Aorta (tissue), 5 donors: ENCODE measurements at regions of chr17 and their contacts with region 1.

Region 1: DNA sequence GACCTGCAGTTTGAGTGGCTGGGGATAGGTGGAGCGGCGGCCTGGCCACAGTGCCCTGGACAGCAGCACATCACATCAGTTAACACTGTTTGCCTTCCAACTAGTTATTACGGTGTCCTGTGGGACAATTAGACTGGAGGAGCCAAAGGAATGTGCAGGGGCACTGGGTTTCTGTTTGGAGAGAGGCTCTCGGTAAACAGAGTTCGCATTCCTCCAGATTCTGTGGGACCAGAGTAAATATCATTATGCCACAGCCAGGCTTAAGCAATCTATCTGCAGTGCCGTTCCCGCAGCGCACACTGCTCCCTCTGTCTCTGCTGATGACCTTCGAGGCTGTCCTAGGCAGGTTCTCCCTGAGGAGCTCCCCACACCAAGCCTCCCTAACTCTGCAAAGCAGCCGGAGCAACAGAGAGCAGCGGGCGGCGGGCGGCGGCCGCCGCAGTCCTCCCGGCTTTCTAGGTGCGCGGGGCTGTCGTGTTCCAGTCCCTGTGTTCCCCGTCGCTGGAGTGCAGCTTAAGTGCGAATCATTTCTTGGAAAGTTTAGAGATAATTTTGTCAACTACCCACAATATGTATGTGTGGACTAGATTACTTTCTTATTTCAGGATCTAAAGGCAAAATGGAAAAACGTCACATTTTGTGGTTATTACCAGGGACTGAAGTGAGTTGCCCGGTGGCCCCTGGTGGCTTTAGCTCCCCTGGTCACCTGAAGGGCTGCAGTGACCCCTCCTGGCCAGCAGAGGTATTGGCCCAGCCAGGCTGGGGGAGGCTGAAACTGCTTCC is 43.2 kb downstream of the PGS1 start:
- DNase-seq: peak; percentile 87 to 92
- ATAC-seq: peak; percentile 81
- H3K4me3 ChIP-seq: no peak overlapping the region
- H3K27ac ChIP-seq: no peak overlapping the region
- H3K4me1 ChIP-seq: no peaks in the 10 kb centered on the region
- H3K27me3 ChIP-seq: no peaks in the 10 kb centered on the region

Region 2: DNA sequence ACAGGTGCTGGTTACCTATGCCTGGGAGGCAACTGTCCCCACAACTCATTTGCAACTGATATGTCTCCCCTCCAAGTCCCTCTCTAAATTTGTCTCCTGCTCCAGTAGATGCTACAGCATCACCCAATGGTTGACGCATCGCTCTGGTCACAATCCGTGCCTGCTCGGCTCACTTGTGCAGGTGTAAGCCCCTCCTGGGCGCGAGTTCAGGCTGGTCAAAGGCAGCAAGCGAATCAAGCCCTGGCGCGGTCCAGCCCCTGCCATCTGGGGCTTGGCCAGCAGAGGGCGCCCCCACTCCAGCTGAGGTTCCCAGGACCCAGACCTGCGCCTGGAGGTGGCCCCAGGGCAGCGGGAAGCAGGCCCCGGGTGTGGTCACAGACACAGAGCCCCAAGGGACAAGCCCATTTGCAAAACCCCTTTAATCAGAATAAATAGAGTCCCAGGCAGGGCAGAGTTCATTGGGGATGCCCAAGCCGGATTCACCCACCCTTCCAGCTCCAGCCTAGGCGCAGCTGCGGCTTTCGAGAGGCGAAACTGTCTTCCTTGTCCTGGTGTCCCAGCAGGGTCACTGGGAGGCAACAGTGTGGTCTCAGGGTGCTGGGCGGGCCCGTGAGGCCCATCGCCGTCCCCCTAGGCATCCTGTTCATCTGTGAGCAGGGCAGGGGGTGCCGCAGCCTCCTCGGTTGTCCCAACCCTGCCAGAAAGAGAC is 309.0 kb before region 1 on chr17:
- intact Hi-C with region 1: loop called in 1 of 2 experiments (anchors 10 kb)
- DNase-seq: peak; percentile 78 to 92
- ATAC-seq: peak; percentile 83
- H3K4me3 ChIP-seq: no peak overlapping the region
- H3K27ac ChIP-seq: no peak overlapping the region
- H3K4me1 ChIP-seq: no peaks in the 10 kb centered on the region
- H3K27me3 ChIP-seq: no peaks in the 10 kb centered on the region

Region 3: GRCh38 chr17:78250891-78251794 is 170.5 kb before region 1 on chr17:
- intact Hi-C with region 1: loop called in 1 of 2 experiments (anchors 5 kb)
- DNase-seq: peak; percentile 90 to 95
- ATAC-seq: peak; percentile 90
- H3K4me3 ChIP-seq: no peak overlapping the region
- H3K27ac ChIP-seq: no peak overlapping the region
- H3K4me1 ChIP-seq: no peaks in the 10 kb centered on the region
- H3K27me3 ChIP-seq: no peaks in the 10 kb centered on the region

Region 4: DNA sequence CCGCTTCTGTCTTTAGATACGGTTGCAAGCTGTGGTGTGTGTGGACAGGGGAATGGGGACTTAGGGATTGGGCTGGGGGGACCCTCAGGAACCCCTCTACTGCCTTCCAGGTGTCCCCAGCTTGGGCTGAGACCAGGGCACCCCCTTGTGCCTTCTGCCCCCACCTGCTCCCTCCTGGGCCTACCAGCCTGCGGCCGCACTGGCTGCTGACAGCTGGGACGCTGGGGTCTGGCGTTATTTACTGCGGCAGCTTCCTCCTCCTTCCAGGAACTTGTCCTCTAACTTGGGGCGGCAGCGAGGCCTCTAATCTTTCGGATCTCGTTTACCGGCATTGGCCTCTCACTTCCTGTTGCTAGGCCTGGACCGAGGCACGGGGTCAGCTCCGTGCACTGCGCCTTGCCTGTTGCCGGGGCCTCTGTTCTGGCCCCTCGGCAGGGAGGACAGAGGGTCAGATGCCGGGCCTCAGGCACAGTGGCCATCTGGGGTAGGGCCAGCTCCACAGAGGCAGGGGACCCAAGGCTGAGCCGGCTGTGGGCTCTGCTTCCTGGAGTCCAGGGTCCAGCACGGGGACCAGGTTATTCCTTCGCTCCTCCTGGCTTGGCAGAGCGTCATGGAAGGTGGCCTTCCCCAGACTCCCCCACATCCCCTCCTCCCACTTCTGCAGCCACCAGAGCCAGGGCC is 158.5 kb before region 1 on chr17:
- intact Hi-C with region 1: no loop called
- DNase-seq: peak; percentile 79 to 81
- ATAC-seq: peak; percentile 23
- H3K4me3 ChIP-seq: no peak overlapping the region
- H3K27ac ChIP-seq: no peak overlapping the region
- H3K4me1 ChIP-seq: no peaks in the 10 kb centered on the region
- H3K27me3 ChIP-seq: no peaks in the 10 kb centered on the region

Region 5: GRCh38 chr17:78289802-78290363 is 131.8 kb before region 1 on chr17:
- intact Hi-C with region 1: loop called (anchors 2 kb)
- DNase-seq: peak; percentile 88 to 91
- ATAC-seq: peak; percentile 90
- H3K4me3 ChIP-seq: no peak overlapping the region
- H3K27ac ChIP-seq: no peak overlapping the region
- H3K4me1 ChIP-seq: no peaks in the 10 kb centered on the region
- H3K27me3 ChIP-seq: no peaks in the 10 kb centered on the region

Region 6: DNA sequence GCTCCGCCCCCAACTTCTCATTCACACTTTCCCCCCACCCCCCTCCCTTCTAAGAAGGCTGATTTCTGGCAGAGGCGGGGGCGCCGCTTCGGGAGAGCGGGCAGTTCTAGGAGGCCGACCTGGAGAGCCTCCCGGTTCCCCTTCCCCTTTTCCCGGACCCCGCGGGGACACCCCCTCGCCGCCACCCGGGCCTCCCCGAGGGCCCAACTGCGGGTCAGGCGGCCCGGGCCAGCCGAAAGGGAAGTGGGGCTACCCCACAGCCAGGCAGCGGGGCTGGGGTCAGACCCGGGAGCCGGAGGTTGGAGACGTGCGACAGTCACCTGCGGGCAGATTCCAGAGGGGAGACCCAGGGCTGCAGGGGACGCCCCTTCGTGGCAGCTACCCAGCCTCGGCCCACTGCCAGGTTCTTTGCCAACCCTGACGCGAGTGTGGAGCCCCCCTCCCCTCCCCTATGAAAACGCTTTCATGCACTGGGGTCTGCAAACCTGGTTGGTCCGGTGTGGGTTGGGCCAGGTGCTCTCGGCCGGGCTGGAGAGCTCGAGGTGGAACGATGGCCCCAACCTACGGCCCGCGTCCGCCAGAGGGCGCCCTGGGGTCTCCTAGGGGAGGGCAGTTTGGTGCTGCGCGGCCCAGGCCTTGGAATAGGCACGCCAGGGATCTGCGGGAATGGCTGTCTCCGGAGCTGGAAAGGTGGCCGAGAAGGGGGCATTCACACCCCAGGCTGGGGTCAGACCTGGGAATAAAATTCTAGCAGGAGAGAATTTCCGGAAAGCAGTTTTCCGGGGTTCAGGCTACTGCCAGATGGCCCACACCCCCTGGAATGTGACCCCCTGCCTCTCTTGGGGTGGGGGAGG is 61.1 kb before region 1 on chr17:
- intact Hi-C with region 1: loop called (anchors 1 to 5 kb)
- DNase-seq: peak; percentile 96 to 99
- ATAC-seq: peak; percentile 84
- H3K4me3 ChIP-seq: no peak overlapping the region
- H3K27ac ChIP-seq: peak overlapping the region; percentile 14 to 75
- H3K4me1 ChIP-seq: peaks cover 2 to 5% of the 10 kb centered on the region in 2 donors
- H3K27me3 ChIP-seq: no peaks in the 10 kb centered on the region

Region 7: DNA sequence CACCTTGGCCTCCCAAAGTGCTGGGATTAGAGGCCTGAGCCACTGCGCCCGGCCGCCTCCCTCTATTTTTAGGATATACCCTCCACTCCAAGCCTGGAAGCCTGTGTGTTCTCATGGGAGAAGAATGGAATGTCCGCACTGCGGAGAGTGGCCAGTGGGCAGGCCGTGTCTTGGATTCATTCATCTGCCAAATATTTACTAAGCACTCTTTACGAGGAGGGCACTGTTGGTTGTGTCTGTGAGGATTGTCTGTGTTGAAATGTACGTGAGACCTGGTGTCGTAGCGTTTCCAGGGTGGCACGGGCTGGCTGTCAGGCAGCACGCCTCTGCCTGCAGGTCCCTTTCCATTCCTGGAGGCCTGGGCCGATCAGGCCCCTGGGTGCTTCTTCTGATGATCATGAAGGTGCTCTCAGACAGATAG is 24.0 kb before region 1 on chr17:
- intact Hi-C with region 1: loop called in 1 of 2 experiments (anchors 2 kb)
- DNase-seq: peak; percentile 77 to 86
- ATAC-seq: peak; percentile 82
- H3K4me3 ChIP-seq: no peak overlapping the region
- H3K27ac ChIP-seq: peak overlapping the region in 1 of 2 donors; percentile 96
- H3K4me1 ChIP-seq: peaks cover 2 to 4% of the 10 kb centered on the region in 2 donors
- H3K27me3 ChIP-seq: no peaks in the 10 kb centered on the region

Region 8: GRCh38 chr17:78529871-78530670 is 108.4 kb after region 1 on chr17:
- intact Hi-C with region 1: no loop called
- DNase-seq: peak in 1 of 2 donors; percentile 58
- ATAC-seq: no peak
- H3K4me3 ChIP-seq: no peak overlapping the region
- H3K27ac ChIP-seq: no peak overlapping the region
- H3K4me1 ChIP-seq: no peaks in the 10 kb centered on the region
- H3K27me3 ChIP-seq: no peaks in the 10 kb centered on the region